K562 (cell line): ENCODE measurements at regions of chr1 and their contacts with region 1.

Region 1: DNA sequence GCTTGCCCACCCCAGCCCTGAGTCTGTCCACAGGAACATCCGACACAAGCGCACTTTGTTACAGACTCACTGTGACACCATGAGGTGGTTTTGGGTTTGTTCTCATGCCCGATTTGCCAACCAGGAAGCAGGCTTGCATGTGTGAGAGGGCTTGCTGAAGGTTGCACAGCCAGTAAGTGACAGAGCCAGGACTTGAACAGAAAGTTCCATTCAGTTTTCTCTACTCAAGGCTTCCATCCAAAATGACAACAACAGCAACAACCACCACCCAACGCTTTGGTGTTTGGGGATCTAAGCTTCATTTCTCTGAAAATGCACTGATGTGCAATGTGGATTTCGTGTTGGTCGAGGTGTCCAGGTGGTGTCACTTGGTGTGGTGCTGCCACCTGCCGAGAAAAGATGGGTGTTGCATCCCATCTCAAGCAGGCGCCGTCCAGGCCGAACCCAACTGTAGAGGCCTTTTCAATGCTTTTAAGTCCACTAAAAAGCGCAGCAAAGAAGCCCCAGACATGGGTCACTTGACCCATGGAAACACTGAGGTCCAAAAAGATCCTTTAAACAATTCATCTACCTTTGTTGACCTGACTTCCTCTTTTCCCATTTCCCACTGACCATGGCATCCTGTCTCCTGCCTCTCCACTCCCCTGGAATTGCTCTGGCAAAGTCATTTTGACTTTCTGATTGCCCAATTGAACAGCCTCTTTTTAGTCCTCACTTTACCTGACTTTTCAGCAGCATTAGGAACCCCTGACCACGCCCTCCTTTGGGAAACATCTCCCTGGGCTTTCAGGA is 12.2 kb downstream of the CITED4 start:
- DNase-seq: peak; percentile 79 to 89 (median 80)
- ATAC-seq: peak; percentile 94
- H3K4me3 ChIP-seq: no peak overlapping the region
- H3K27ac ChIP-seq: no peak overlapping the region
- H3K4me1 ChIP-seq: peaks cover 6 to 18% of the 10 kb centered on the region in 2 experiments; a peak in 4 of 5 replicates
- H3K27me3 ChIP-seq: no peaks in the 10 kb centered on the region
- CTCF ChIP-seq: peak; percentile 92 to 99 (median 96)
- EP300 ChIP-seq: no peak
- POLR2A ChIP-seq: no peak
- RAD21 ChIP-seq: peak; percentile 90 to 97

Region 2: DNA sequence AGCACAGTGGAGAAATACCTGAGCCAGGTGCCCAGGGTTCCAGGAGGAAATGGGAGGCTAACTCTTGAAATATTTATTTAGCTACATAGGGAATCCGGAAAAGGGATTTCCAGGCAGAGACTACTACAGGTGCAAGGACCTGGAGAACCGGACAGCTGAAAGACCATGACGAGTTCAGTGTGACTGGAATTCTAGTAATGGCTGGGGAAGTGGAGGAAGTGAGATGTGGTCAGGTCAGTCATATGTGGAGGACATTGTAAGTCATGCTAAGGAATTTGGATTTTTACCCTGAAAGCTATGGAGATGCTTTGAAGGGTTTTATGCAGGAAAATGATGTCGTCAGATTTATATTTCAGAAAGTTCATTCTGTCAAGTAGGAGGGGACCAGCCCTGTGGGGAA is 807.7 kb before region 1 on chr1:
- CTCF ChIA-PET with region 1: no interaction called
- POLR2A ChIA-PET with region 1: no interaction called
- in situ Hi-C with region 1: no loop called
- intact Hi-C with region 1: no loop called
- DNase-seq: no peak
- ATAC-seq: no peak
- H3K4me3 ChIP-seq: peak overlapping the region; percentile 91
- H3K27ac ChIP-seq: no peak overlapping the region
- H3K4me1 ChIP-seq: peaks cover 29 to 51% of the 10 kb centered on the region in 2 experiments
- H3K27me3 ChIP-seq: no peaks in the 10 kb centered on the region
- CTCF ChIP-seq: no peak
- EP300 ChIP-seq: no peak
- POLR2A ChIP-seq: no peak; the same call in 1 of the 2 replicates
- RAD21 ChIP-seq: no peak

Region 3: DNA sequence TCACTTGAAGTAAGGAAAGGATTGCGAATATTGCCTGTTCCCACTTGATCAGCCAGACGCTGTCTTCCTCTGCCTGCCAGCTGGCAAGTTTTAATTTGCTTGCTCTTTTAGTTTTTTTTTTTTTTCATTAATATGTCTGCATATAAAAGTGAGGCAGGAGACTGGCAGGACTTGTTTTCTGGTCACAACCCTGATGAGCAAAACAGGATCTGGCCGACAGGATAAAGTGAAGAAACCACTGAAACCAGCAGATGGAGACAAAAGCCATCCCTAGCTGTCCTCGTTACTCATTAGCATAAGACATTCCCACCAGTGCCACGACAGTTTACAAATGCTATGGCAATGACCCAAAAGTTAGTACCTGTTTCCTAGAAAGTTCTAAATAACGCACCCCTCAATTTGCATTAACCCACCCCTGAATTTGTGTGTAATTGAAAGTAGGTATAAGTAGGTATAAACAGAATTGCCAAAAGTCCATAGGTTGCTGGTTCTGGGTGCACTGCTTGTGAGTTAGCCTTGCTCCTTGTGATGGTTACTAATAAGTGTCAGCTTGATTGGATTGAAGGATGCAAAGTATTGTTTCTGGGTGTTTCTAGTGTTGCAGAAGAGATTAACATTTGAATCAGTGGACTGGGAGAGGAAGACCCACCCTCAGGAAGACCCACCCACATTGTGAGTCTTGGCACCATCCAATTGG is 257.7 kb before region 1 on chr1:
- CTCF ChIA-PET with region 1: interaction called, 12 read pairs
- POLR2A ChIA-PET with region 1: no interaction called
- in situ Hi-C with region 1: no loop called
- intact Hi-C with region 1: loop called (anchors 1 kb)
- DNase-seq: peak in 2 of 4 experiments; percentile 44 to 73
- ATAC-seq: peak; percentile 93
- H3K4me3 ChIP-seq: no peak overlapping the region
- H3K27ac ChIP-seq: no peak overlapping the region
- H3K4me1 ChIP-seq: 0 out of 5 replicates have a peak, but pooled peaks cover 0 to 3% of the 10 kb centered on the region in 2 experiments
- H3K27me3 ChIP-seq: peaks cover under 1 to 3% of the 10 kb centered on the region in 2 experiments; a peak in 2 of 5 replicates
- CTCF ChIP-seq: peak; percentile 76 to 82 (median 76)
- EP300 ChIP-seq: no peak
- POLR2A ChIP-seq: no peak
- RAD21 ChIP-seq: peak; percentile 55 to 83

Region 4: DNA sequence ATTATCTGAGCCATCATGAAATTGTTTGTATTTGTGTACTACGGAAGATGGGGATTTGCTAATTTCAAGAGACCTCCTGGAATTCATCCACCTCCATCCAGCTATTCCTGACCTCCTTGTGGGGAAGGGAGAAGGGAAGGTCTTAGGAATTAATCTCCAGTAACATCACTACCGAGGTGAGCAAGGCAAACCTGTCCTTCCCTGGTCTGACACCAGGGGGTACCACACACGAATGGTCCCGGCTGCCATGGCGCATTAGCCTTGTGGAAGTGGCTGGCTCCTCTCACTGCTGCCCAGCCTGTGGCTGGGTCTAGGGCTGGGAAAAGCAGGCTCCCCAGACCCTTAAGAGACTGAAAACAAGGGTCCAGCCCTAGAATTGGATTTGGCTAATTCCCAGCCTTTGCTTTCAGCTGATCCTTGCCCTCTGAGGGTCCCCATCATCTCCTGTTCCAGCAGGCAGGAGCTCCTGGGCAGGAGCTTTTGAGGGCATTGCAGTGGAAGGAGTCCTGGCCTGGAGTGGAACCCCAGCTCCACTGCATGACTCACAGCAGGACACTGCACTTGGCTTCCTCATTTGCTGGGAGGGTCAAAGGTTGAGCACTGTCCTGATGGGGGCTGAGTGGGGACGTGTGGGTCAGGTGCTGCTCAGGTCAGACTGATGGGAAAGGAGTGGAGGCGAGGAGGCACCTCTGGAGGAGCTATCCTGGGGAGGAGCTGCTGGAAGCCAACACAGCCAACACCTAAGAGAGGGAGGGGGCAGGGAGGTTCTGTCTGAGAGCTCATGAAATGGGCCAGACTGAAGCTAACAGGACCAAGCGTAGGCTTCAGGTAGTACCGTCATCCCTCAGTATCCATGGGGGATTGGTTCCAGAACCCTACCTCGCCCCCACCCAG is 219.3 kb before region 1 on chr1:
- CTCF ChIA-PET with region 1: interaction called, 11 read pairs
- POLR2A ChIA-PET with region 1: interaction called, 3 read pairs
- in situ Hi-C with region 1: no loop called
- intact Hi-C with region 1: loop called (anchors 5 kb)
- DNase-seq: peak; percentile 71 to 80 (median 74)
- ATAC-seq: peak; percentile 87
- H3K4me3 ChIP-seq: no peak overlapping the region
- H3K27ac ChIP-seq: no peak overlapping the region
- H3K4me1 ChIP-seq: peaks cover 22 to 27% of the 10 kb centered on the region in 2 experiments
- H3K27me3 ChIP-seq: peaks cover 9 to 30% of the 10 kb centered on the region in 2 experiments; a peak in 4 of 5 replicates
- CTCF ChIP-seq: peak; percentile 86 to 93 (median 93)
- EP300 ChIP-seq: no peak
- POLR2A ChIP-seq: no peak
- RAD21 ChIP-seq: peak; percentile 70 to 90

Region 5: DNA sequence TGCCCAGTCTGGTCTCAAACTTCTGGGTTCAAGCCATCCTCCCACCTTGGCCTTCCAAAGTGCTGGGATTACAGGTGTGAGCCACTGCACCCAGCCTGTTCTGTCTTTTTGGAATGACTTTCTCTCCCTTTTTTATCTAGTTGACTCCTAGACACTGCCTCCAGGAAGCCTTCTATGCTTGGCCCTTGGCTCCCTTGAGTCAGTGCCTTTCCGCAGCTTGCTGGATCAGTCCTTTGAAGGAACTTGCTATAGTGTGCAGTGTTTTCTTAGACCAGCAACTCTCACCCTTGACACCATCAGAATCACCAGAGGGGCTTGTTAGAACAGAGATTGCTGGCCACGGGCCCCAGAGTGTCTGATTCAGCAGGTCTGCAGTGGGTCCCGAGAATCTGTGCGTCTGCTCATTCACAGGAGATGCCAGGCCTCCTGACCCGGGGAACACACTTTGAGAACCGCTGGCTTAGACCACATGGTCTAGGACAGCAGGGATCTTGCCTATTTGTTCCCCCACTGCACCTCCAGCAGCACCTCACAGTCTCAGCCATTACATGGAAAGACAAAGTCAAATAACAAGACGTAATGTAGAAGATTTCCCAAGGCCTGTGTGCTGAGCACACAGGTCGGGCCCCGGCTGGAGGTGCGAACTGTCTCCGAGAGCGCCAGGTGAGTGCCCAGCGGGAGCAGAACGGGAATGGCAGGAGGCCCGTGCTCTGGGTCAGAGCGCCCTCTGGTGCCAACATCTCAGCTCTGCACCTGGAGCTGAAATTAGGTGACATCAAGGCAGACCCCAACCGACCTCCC is 102.1 kb after region 1 on chr1:
- CTCF ChIA-PET with region 1: interaction called, 120 read pairs
- POLR2A ChIA-PET with region 1: interaction called, 9 read pairs
- in situ Hi-C with region 1: loop called (anchors 5 kb)
- intact Hi-C with region 1: loop called (anchors 1 kb)
- DNase-seq: peak; percentile 80 to 88 (median 86)
- ATAC-seq: peak; percentile 88
- H3K4me3 ChIP-seq: no peak overlapping the region
- H3K27ac ChIP-seq: no peak overlapping the region
- H3K4me1 ChIP-seq: peaks cover 5 to 12% of the 10 kb centered on the region in 2 experiments; a peak in 4 of 5 replicates
- H3K27me3 ChIP-seq: peaks cover 5 to 10% of the 10 kb centered on the region in 2 experiments; a peak in 3 of 5 replicates
- CTCF ChIP-seq: peak; percentile 96 to 98 (median 98)
- EP300 ChIP-seq: no peak
- POLR2A ChIP-seq: no peak
- RAD21 ChIP-seq: peak; percentile 98 to 100

Region 6: DNA sequence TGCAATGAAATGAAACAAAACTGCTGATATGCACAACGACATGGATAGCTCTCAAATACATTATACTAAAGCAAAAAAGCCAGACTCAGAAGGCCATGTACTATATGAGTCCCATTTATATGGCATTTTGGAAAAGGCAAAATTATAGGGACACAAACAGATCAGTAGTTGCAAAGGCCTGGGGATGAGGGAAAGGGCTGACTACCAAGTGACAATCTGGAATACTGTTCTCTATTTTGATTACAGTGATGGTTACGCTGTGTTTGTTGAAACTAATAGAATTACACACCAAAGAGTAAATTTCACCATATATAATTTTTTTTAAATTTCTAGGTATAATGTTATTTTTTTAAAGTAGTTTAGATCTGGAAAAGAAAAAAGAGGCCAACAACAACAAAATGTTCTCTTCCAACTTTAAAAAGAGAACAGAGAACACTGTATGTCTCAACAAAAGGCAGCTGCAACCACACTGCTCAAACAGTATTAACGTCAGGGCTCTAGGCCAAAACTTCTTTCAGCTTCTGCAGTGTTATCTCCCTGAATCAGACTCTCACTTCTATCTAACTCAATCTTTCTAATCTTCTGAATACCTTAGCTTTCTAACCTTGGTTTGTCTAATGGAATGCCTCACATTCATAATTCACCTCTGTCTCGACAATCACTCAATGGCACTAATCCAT is 1409.2 kb after region 1 on chr1:
- CTCF ChIA-PET with region 1: no interaction called
- POLR2A ChIA-PET with region 1: no interaction called
- in situ Hi-C with region 1: no loop called
- intact Hi-C with region 1: no loop called
- DNase-seq: peak in 1 of 4 experiments; percentile 20
- ATAC-seq: peak; percentile 77
- H3K4me3 ChIP-seq: no peak overlapping the region
- H3K27ac ChIP-seq: peak overlapping the region; percentile 11; the same call in 1 of the 3 replicates
- H3K4me1 ChIP-seq: peaks cover 4 to 14% of the 10 kb centered on the region in 2 experiments; a peak in 4 of 5 replicates
- H3K27me3 ChIP-seq: no peaks in the 10 kb centered on the region
- CTCF ChIP-seq: no peak
- EP300 ChIP-seq: no peak
- POLR2A ChIP-seq: no peak
- RAD21 ChIP-seq: no peak